CD8-positive, alpha-beta T cell (primary cell): ENCODE measurements at regions of chr3 and their contacts with region 1.

Region 1: GRCh38 chr3:187777331-187777941 is 32.2 kb upstream of the BCL6 start:
- DNase-seq: peak in 8 of 9 experiments; percentile 10 to 84 (median 43)
- ATAC-seq: peak; percentile 88
- H3K4me3 ChIP-seq: no peak overlapping the region
- H3K4me3 Mint-ChIP-seq: peak overlapping the region; percentile 33
- H3K27ac ChIP-seq: peak overlapping the region in 1 of 2 experiments; percentile 64
- H3K27ac Mint-ChIP-seq: peak overlapping the region; percentile 88
- H3K4me1 ChIP-seq: peaks cover 16% of the 10 kb centered on the region
- H3K4me1 Mint-ChIP-seq: peaks cover 23% of the 10 kb centered on the region
- H3K27me3 ChIP-seq: no peaks in the 10 kb centered on the region
- H3K27me3 Mint-ChIP-seq: no peaks in the 10 kb centered on the region
- CTCF ChIP-seq: no peak

Region 2: GRCh38 chr3:187758318-187758955 is 19.0 kb before region 1 on chr3:
- CTCF ChIA-PET with region 1: no interaction called
- POLR2A ChIA-PET with region 1: no interaction called
- intact Hi-C with region 1: no loop called
- DNase-seq: no peak
- ATAC-seq: no peak
- H3K4me3 ChIP-seq: no peak overlapping the region
- H3K4me3 Mint-ChIP-seq: no peak overlapping the region
- H3K27ac ChIP-seq: no peak overlapping the region
- H3K27ac Mint-ChIP-seq: no peak overlapping the region
- H3K4me1 ChIP-seq: no peaks in the 10 kb centered on the region
- H3K4me1 Mint-ChIP-seq: no peaks in the 10 kb centered on the region
- H3K27me3 ChIP-seq: peaks cover 0 to 2% of the 10 kb centered on the region in 2 experiments
- H3K27me3 Mint-ChIP-seq: no peaks in the 10 kb centered on the region
- CTCF ChIP-seq: no peak

Region 3: DNA sequence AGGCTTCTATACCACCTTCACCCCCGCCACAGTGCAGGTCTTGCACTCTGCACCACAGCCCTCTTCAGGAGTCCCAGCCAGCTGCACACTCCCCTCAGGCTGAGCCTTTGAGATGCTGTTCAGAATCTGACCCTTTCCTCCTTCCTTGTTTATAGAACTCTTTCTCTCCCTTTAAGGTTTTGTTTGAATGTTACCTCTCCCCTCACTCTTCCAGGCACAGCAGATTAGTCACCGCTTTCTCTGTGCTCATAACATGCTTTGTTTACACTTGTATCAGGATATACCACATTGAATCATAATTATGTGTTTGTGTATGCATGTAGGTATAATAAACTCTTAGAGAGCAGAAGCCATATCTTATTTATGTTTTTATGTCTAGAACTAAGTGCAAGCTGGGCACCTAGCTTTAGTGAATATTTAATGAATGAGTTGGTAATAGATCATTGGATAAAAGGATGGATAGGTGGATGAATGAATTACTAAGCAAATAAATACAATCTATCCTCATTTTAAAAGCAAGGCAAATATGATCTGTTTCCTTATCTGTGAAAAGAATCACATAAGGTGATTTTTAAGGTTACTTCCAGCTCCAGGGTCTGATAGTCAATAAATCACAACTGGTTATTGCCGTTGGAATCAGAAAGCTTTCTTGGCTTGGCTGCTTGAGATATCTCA is 136.3 kb after region 1 on chr3:
- CTCF ChIA-PET with region 1: no interaction called
- POLR2A ChIA-PET with region 1: no interaction called
- intact Hi-C with region 1: loop called in 1 of 2 experiments (anchors 5 kb)
- DNase-seq: no peak
- ATAC-seq: no peak
- H3K4me3 ChIP-seq: no peak overlapping the region
- H3K4me3 Mint-ChIP-seq: no peak overlapping the region
- H3K27ac ChIP-seq: no peak overlapping the region
- H3K27ac Mint-ChIP-seq: no peak overlapping the region
- H3K4me1 ChIP-seq: peaks cover 7% of the 10 kb centered on the region
- H3K4me1 Mint-ChIP-seq: peaks cover 12% of the 10 kb centered on the region
- H3K27me3 ChIP-seq: no peaks in the 10 kb centered on the region
- H3K27me3 Mint-ChIP-seq: no peaks in the 10 kb centered on the region
- CTCF ChIP-seq: no peak